GM12878 (cell line): ENCODE measurements at regions of chr3 and their contacts with region 1.

Region 1: DNA sequence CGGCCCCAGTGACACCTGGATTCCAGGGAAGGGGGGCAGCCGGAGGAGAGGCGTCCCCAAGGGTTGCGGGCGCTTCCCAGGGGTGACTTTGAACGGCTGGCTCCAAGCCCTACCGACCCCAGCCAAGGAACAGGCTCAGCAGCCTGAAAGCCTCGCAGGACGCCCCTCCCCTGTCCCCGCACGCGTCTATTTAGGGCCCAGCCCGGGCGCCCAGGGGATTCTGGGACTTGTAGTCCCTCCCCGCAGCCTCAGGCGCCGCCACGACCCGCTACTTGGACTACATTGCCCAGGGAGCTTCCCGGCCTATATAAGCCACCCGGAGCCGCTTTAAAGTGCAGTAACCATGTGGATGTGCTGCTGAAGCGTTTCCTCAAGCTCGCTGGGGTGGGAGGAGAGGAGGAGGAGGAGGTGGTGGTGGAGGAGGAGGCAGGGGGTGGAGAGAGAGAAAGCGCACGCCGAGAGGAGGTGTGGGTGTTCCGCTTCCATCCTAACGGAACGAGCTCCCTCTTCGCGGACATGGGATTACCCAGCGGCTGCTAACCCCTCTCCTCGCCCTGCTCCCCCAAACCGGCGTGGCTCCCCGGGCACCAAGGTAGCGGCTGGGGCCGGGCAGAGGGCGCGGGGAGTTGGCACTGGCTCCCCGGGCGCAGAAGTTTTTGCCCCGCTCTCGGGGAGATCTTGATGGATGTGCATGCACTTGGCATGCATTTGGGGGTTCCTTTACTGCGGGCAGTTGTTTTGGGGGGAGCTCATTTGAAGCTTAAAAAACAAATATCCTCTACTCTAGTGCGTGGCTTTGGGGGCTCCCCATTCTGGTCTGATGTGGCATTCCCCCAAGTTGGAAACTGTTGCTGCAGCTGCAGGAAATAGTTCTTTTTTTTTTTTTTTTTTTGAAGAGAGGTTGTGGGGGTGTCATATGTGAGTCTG is at the start of gene ITPR1:
- DNase-seq: peak; percentile 96
- ATAC-seq: peak; percentile 89
- H3K4me3 ChIP-seq: peak within 1 kb of the TSS; percentile 87
- H3K27ac ChIP-seq: peak within 1 kb of the TSS; percentile 82
- H3K4me1 ChIP-seq: peaks cover 14% of the 10 kb centered on the region
- H3K27me3 ChIP-seq: no peaks in the 10 kb centered on the region; a peak in 1 of 4 replicates
- CTCF ChIP-seq: no peak
- EP300 ChIP-seq: no peak
- POLR2A ChIP-seq: peak; percentile 100
- RAD21 ChIP-seq: peak; percentile 25; the same call in 1 of the 2 replicates
- polyA plus RNA-seq, gene ITPR1: 12.2 to 12.6 TPM

Region 2: DNA sequence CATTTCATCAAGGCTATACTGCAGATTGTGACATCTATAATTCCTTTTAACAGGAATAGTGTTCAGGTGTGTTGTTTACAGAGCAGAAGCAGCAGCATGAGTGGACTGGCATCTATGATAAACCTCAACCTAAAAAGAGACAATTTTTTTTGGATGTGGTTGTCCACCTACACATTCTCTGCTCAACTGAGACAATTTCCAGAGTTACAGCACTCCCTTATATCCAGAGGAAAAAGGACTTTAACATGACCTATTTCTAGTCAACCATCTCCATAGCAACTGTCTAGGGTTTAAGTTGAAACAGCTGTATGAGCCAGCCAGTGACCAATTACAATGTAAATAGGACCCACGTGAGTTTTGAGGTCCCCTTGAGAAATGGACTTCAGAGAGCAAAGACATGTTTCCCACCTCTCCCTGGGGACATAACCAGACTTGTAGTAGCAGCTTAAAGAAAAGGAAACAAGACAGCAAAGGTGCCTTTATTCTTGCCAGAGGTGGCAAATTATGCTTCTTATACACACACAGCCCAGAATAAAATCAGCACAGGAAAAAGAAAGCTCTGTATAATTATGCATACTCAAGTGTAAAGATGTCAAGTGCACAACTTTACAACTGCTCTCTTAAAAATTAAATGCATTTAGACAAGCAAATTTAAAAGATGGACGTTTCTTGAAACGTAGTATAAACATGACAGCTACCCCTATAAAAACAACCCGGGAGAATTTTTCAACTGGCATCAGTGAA is 66.5 kb before region 1 on chr3:
- CTCF ChIA-PET with region 1: interaction called, 8 read pairs
- POLR2A ChIA-PET with region 1: interaction called, 6 read pairs
- RAD21 ChIA-PET with region 1: interaction called, 19 read pairs
- SMC1A ChIA-PET with region 1: interaction called, 16 read pairs
- in situ Hi-C with region 1: no loop called
- intact Hi-C with region 1: loop called (anchors 5 kb)
- DNase-seq: peak; percentile 91
- ATAC-seq: peak; percentile 90
- H3K4me3 ChIP-seq: no peak overlapping the region
- H3K27ac ChIP-seq: peak overlapping the region; percentile 33
- H3K4me1 ChIP-seq: peaks cover 11% of the 10 kb centered on the region
- H3K27me3 ChIP-seq: no peaks in the 10 kb centered on the region
- CTCF ChIP-seq: no peak
- EP300 ChIP-seq: peak in 1 of 2 experiments; percentile 68; a peak in 1 of 4 replicates
- POLR2A ChIP-seq: no peak
- RAD21 ChIP-seq: no peak

Region 3: DNA sequence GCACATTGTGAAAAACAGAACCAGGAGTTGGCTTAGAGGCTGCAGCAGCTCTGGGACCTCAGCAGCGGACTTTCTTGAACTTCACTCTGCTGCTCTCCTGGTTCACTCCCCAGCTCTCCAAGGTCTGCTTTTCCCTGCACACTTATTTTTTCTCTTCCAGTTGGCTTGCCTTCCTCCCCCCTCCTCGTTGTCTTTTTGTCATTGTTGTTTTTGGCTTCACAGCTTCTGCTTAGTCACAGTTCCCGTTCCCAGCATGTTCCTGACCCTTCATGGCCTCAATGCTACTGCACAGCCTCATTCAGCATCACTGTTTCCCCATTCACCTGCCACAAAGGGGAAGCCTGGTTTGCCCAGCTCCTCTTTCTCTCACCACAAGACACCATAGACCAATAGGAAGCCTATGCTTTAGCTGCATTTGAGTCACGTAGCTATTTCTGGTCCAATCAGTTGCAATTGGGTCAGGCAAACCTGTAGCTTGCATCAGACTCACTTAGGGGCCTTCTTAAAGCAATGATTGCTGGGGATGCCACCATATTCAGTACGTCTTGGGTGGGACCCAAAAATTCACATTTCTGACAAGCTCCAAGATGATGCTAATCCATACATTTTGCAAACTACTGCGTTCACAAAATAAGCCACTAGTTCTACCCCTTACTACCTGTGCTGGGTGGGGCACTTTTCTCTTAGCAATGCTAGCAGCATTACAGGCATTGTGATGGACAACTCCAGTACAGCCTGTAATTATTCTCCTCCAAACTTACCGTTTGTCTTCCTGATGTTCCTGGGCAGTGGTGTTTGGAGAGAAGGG is 18.4 kb before region 1 on chr3:
- CTCF ChIA-PET with region 1: interaction called, 10 read pairs
- POLR2A ChIA-PET with region 1: interaction called, 29 read pairs
- RAD21 ChIA-PET with region 1: interaction called, 32 read pairs
- SMC1A ChIA-PET with region 1: interaction called, 33 read pairs
- in situ Hi-C with region 1: no loop called
- intact Hi-C with region 1: no loop called
- DNase-seq: peak; percentile 81
- ATAC-seq: peak; percentile 91
- H3K4me3 ChIP-seq: peak overlapping the region; percentile 35; the same call in 1 of the 2 replicates
- H3K27ac ChIP-seq: peak overlapping the region; percentile 64
- H3K4me1 ChIP-seq: peaks cover 18% of the 10 kb centered on the region
- H3K27me3 ChIP-seq: no peaks in the 10 kb centered on the region
- CTCF ChIP-seq: no peak
- EP300 ChIP-seq: no peak
- POLR2A ChIP-seq: peak; percentile 42; the same call in 1 of the 2 replicates
- RAD21 ChIP-seq: no peak

Region 4: GRCh38 chr3:4584456-4585249 is 91.4 kb after region 1 on chr3:
- CTCF ChIA-PET with region 1: interaction called, 12 read pairs
- POLR2A ChIA-PET with region 1: interaction called, 9 read pairs
- RAD21 ChIA-PET with region 1: interaction called, 14 read pairs
- SMC1A ChIA-PET with region 1: interaction called, 7 read pairs
- in situ Hi-C with region 1: no loop called
- intact Hi-C with region 1: no loop called
- DNase-seq: peak; percentile 13
- ATAC-seq: peak; percentile 56
- H3K4me3 ChIP-seq: peak overlapping the region; percentile 82
- H3K27ac ChIP-seq: peak overlapping the region; percentile 30
- H3K4me1 ChIP-seq: peaks cover 13% of the 10 kb centered on the region
- H3K27me3 ChIP-seq: no peaks in the 10 kb centered on the region
- CTCF ChIP-seq: peak in 1 of 3 experiments; percentile 55; a peak in 2 of 6 replicates
- EP300 ChIP-seq: 0 out of 4 replicates have a peak, but pooled peaks of 1 of the 2 experiments have one; percentile 24
- POLR2A ChIP-seq: no peak
- RAD21 ChIP-seq: peak; percentile 54; the same call in 1 of the 2 replicates